ENCODE measurements at regions of chr6 and their contacts with region 1.

Region 1: DNA sequence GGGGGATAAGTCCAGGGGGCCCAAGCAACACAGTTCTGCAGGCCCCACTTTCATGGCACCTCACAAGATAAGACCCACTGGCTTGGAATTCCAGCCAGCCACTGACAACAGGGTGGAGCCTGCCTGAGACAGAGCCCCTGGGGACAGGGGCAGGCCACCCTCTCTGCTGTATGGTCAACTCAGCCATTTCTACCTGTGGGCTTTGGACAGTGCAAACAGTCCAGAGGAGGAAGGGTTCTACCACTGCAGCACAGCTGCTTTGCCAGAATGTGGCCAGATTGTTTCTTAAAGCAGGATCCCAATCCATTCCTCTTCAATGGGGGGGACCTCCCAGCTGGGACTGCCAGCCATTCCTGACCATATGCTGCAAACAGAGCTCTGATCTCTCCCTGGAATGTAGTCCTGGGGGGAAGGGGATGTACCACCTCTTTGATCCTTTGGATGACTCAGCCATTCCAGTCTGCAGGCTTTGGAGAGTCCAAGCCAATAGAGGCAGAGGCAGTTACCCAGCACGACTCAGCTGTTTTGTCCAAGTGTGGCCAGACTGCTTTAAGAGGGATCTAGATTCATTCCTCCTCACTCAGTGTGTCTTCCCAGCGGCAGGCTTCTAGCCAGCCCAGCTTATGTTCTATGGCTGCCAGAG is 842.2 kb downstream of the EPHA7 start:
- DNase-seq: no peak
- H3K4me3 ChIP-seq: no peak overlapping the region
- H3K27ac ChIP-seq: no peak overlapping the region
- H3K4me1 ChIP-seq: no peaks in the 10 kb centered on the region
- H3K27me3 ChIP-seq: no peaks in the 10 kb centered on the region
- CTCF ChIP-seq: no peak
- POLR2A ChIP-seq: no peak

Region 2: DNA sequence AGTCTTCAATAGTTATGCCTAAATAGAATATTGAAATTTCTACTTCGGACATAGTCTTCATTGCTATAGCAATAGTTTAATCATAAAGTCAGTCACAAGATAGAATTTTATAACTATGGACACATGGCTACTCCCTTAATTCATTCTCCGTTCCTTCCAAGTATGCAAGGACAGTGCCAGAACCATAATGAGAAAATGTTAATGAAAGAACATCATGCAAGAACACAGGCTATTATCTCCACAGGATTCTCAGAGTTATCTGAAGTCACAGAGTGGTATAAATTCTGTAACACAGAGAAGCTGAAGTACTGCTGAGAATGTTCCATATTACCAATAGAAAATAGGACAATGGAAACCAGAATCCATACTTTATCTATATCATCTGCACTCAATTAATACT is 16.0 kb after region 1 on chr6:
- intact Hi-C with region 1: loop called (anchors 2 kb)
- DNase-seq: no peak
- H3K4me3 ChIP-seq: no peak overlapping the region
- H3K27ac ChIP-seq: no peak overlapping the region
- H3K4me1 ChIP-seq: no peaks in the 10 kb centered on the region
- H3K27me3 ChIP-seq: no peaks in the 10 kb centered on the region
- CTCF ChIP-seq: no peak
- POLR2A ChIP-seq: no peak

Region 3: GRCh38 chr6:92806254-92806653 is 229.1 kb after region 1 on chr6:
- intact Hi-C with region 1: no loop called
- DNase-seq: no peak
- H3K4me3 ChIP-seq: no peak overlapping the region
- H3K27ac ChIP-seq: no peak overlapping the region
- H3K4me1 ChIP-seq: no peaks in the 10 kb centered on the region
- H3K27me3 ChIP-seq: no peaks in the 10 kb centered on the region
- CTCF ChIP-seq: no peak
- POLR2A ChIP-seq: no peak